Breast epithelium (tissue), 4 donors: ENCODE measurements at regions of chr12 and their contacts with region 1.

Region 1: DNA sequence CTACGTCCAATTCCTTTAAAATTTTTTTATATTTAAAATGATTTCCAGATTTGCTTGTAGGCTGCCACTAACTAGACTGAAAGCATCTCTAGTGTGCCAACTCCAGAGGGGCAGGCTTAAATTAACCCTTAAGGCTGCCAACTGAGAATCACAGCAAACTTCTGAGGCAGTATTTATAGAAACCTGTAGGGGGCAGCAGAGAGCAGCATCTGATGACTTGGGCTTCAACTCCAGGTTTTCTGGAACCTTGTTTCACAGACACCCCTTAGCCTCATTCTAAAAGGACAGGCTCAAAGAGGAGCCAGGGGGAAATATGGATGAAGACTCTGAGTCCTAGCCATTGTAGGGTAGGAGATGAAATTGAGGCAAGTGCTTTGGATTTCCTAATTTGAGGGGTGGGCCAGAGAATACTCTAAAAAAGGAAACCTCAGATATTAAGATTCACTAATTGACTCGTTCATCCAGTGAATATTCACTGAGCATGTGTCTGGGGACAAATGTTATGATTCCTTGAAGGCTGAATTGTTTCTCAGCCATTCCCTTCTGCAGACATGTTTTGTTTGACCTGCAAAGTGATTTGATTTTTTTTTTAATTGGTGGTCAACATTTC is 63.3 kb upstream of the HSPB8 start:
- DNase-seq: no peak
- H3K4me3 ChIP-seq: no peak overlapping the region
- H3K27ac ChIP-seq: no peak overlapping the region
- H3K4me1 ChIP-seq: no peaks in the 10 kb centered on the region
- H3K27me3 ChIP-seq: peaks cover 0 to 4% of the 10 kb centered on the region in 2 donors
- CTCF ChIP-seq: peak; percentile 53 to 65 (median 60)
- POLR2A ChIP-seq: no peak

Region 2: DNA sequence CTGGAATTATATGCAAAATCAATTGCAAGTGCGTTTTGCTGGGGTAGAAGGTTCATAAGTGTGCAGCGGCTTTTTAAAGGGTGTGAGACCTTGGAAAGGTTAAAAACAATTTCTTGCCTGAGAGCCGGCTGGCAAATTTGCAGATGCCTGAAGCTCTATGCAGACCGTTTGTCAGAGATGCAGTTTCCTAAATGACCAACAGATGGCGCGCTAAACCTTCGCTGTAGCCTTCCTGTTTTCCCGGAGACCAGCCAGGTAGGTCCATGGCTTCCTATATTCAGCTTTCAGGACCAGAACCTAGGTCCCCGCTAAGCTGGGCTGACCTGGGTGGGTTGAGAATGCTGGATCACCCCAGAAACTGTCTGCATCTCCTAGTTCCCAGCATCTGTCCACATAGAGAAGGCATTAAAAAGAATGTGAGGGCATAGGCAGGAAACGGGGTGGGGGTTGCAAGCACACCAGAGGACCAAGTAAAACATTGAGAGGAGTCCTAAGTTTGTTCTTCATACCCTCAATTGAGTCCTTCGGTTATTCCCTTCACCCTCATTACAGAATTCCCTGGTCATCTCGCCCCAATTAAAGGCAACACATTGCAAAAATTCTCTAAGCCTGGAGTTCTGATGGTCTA is 1748.3 kb before region 1 on chr12:
- intact Hi-C with region 1: loop called (anchors 5 kb)
- DNase-seq: peak; percentile 58 to 77
- H3K4me3 ChIP-seq: no peak overlapping the region
- H3K27ac ChIP-seq: no peak overlapping the region
- H3K4me1 ChIP-seq: no peaks in the 10 kb centered on the region
- H3K27me3 ChIP-seq: peaks cover 0 to 42% of the 10 kb centered on the region in 2 donors
- CTCF ChIP-seq: peak; percentile 58 to 88 (median 85)
- POLR2A ChIP-seq: no peak

Region 3: DNA sequence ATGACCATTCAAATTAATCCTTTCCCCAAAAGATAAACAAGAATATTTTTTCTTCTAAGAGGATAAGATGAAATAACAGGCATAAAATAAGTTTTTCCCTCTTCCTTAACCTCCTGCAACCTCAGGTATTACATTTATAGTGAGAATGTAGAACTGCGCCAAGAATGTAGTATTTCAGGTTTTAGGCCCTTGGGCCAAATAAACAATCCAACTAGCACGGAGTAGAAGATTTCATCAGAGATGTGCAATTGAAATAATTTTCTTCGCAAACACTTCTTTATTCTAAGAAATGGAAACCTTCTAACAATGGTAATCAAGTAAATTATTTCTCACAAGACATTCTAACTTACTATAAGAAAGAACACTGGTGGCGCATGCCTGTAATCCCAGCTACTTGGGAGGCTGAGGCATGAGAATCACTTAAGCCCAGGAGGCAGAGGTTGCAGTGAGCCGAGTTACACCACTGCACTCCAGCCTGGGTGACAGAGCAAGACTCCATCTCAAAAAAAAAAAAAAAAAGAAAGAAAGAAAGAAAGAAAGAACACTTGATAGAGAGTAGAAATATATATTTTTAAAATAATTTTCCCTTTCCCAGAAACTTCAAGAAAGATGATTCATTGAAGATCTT is 843.5 kb before region 1 on chr12:
- intact Hi-C with region 1: loop called (anchors 10 kb)
- DNase-seq: peak in 1 of 2 donors; percentile 62
- H3K4me3 ChIP-seq: no peak overlapping the region
- H3K27ac ChIP-seq: peak overlapping the region; percentile 49 to 78
- H3K4me1 ChIP-seq: no peaks in the 10 kb centered on the region
- H3K27me3 ChIP-seq: no peaks in the 10 kb centered on the region
- CTCF ChIP-seq: no peak
- POLR2A ChIP-seq: no peak

Region 4: GRCh38 chr12:119195236-119195635 is 79.8 kb after region 1 on chr12:
- intact Hi-C with region 1: loop called (anchors 2 kb)
- DNase-seq: no peak
- H3K4me3 ChIP-seq: no peak overlapping the region
- H3K27ac ChIP-seq: no peak overlapping the region
- H3K4me1 ChIP-seq: no peaks in the 10 kb centered on the region
- H3K27me3 ChIP-seq: no peaks in the 10 kb centered on the region
- CTCF ChIP-seq: no peak
- POLR2A ChIP-seq: no peak

Region 5: GRCh38 chr12:119412811-119413794 is 297.7 kb after region 1 on chr12:
- intact Hi-C with region 1: loop called (anchors 10 kb)
- DNase-seq: no peak
- H3K4me3 ChIP-seq: no peak overlapping the region
- H3K27ac ChIP-seq: no peak overlapping the region
- H3K4me1 ChIP-seq: no peaks in the 10 kb centered on the region
- H3K27me3 ChIP-seq: peaks cover 0 to 11% of the 10 kb centered on the region in 2 donors
- CTCF ChIP-seq: peak; percentile 29 to 78 (median 66)
- POLR2A ChIP-seq: no peak